HCT116 (cell line): ENCODE measurements at regions of chr12 and their contacts with region 1.

Region 1: DNA sequence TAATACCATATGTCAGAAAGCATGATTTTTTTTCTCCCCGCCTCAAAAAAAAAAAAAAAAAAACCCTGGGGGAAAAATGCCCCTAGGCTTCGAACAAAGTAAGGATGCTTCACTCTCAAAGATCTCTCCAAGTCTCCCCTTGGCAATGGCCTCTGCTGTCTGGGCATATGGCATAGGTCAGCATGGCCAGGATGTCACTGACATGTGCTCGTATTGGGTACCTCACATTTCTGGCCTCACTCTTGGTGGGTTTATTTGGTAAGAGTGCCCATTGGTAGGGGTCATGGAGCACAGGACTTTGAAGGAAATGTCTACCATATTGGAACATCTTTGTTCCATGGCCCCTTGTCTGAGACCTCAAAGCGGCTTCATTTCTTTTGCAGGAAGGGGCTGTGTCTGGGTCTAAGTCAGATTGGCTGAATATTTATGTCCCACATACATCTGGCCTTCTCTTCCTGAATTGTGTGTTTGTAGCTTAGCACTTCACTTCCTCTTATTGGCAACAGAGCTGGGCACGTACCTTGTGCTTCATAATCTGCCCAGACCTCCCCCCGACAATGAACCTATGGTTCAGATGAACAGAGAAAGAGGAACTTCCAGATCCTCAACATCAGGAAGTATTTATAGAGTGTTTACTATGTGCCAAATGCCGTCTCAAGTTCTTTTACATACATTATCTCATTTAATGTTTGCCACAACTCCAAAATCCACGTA is 36.3 kb upstream of the OAS1 start:
- DNase-seq: no peak
- ATAC-seq: no peak
- H3K4me3 ChIP-seq: no peak overlapping the region
- H3K27ac ChIP-seq: no peak overlapping the region
- H3K4me1 ChIP-seq: no peaks in the 10 kb centered on the region
- H3K27me3 ChIP-seq: peaks cover 88% of the 10 kb centered on the region
- CTCF ChIP-seq: no peak
- POLR2A ChIP-seq: no peak
- RAD21 ChIP-seq: no peak

Region 2: DNA sequence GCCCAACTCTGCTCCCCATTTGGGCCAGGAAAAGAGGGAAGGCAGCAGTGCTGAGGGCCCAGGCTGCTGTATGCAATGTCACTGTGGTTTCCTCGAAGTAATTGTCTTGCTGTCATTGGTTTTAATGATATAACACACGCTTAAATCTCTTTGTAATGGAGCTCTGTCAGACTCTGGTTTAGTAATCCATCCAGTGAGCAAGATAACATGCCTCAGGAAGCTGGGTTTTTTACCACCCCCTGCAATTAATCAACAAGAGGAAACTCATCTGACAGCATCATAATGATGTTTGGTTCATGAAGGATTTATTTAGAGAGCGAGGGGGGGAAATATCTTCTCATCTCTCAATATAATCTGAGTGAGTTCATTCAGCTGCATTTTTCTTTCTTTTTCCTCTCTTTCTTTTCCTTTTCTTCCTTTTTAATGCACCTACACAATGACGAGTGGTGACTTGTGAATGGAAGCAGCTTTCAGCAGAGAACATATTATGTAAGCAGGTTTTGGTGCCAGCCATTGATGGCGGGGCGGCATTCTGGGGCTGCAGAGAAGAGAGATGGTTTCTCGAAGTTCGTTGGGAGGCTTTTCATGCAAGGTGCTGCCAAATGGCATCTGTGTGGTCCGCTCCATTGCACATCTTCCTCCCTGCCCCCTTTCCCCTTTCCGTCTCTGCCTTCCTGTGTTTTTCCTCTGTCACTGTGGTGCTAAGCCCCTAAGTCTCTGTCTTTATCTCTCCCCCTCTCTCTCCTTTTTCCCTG is 72.2 kb before region 1 on chr12:
- CTCF ChIA-PET with region 1: no interaction called
- POLR2A ChIA-PET with region 1: no interaction called
- RAD21 ChIA-PET with region 1: no interaction called
- intact Hi-C with region 1: loop called (anchors 5 kb)
- DNase-seq: no peak
- ATAC-seq: no peak
- H3K4me3 ChIP-seq: no peak overlapping the region
- H3K27ac ChIP-seq: no peak overlapping the region
- H3K4me1 ChIP-seq: no peaks in the 10 kb centered on the region
- H3K27me3 ChIP-seq: peaks cover 78% of the 10 kb centered on the region
- CTCF ChIP-seq: no peak
- POLR2A ChIP-seq: no peak
- RAD21 ChIP-seq: no peak